GM12878 (cell line): ENCODE measurements at regions of chr10 and their contacts with region 1.

Region 1: DNA sequence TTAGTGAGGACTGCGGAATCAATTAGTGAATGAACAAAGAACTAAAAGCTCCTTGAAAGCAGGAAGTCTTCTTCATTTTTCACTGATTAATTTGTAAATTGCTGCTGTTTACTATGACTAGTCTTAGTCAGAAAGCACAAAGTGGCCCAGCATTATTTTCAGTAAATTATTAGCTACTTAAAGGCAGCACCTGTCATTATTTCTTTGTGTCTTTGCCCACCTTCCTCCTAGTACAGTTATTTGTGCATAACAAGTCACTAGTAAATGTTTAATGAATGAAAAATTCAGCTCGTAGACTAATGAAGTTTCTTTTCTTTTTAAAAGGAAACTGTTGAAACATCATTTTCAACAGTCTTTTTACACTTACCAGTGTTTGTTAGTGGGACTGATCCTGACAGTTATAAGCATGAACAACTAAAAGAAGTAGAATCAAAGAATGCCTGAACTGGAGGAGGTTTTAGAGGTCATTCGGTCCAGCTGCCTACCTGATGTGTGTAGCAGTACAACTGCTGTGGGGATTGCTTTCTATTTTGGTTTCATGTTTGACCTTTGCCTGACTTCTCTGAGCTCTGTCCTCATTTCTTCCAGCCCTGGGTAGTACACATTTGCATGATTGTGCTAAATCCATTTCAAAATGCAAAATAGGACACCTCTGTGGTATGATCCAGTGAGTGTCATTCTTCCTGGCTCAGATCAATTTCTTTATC is 140.0 kb upstream of the PHYHIPL start:
- DNase-seq: peak; percentile 55
- ATAC-seq: peak; percentile 99
- H3K4me3 ChIP-seq: 0 out of 2 replicates have a peak overlapping the region, but pooled peaks have one; percentile 20
- H3K27ac ChIP-seq: peak overlapping the region; percentile 39; the same call in 1 of the 2 replicates
- H3K4me1 ChIP-seq: peaks cover 13% of the 10 kb centered on the region
- H3K27me3 ChIP-seq: no peaks in the 10 kb centered on the region
- CTCF ChIP-seq: no peak
- EP300 ChIP-seq: peak in 1 of 2 experiments; percentile 71; a peak in 3 of 4 replicates
- POLR2A ChIP-seq: no peak
- RAD21 ChIP-seq: no peak

Region 2: GRCh38 chr10:58867683-58868082 is 168.8 kb before region 1 on chr10:
- CTCF ChIA-PET with region 1: no interaction called
- POLR2A ChIA-PET with region 1: no interaction called
- RAD21 ChIA-PET with region 1: no interaction called
- SMC1A ChIA-PET with region 1: no interaction called
- in situ Hi-C with region 1: no loop called
- intact Hi-C with region 1: no loop called
- DNase-seq: no peak
- ATAC-seq: peak; percentile 62
- H3K4me3 ChIP-seq: no peak overlapping the region
- H3K27ac ChIP-seq: no peak overlapping the region
- H3K4me1 ChIP-seq: no peaks in the 10 kb centered on the region
- H3K27me3 ChIP-seq: no peaks in the 10 kb centered on the region
- CTCF ChIP-seq: no peak
- EP300 ChIP-seq: no peak
- POLR2A ChIP-seq: no peak
- RAD21 ChIP-seq: no peak

Region 3: DNA sequence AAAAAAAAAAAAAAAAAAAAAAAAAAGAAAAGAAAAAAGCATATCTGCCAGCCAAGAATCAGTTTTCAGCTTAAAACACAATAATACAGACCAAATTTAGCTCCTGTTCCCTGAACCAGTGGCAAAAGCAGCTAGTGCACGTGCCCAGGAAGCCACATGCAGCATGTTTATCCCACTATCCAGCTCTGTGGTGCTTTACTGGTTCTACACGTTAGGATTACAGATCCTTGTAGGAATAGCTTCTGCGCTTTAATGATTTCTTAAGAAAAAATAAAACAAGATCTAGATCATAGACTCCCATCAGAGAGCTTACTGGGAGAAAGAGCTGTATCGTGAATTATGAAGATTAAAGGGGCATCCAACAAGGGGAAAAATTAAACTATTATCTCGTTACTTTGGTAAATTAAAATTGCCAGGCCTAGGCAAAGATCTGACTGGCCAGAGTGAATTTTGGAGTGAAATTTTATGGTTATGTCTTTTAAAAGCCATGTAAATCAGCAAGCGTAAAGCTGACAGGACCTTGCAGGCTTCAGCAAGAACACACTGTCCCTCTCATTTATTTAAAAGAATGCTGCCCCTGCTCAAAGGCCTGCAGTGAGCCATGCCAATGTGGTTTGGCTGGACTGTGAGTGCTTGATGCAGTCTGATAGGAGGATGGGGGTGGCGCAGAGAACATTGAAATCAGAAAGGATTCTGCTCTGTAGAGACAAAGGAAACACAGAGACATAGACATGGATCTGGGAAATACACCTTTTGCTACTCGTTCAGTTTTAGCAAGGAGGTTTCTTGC is 37.3 kb before region 1 on chr10:
- CTCF ChIA-PET with region 1: interaction called, 3 read pairs
- POLR2A ChIA-PET with region 1: interaction called, 9 read pairs
- RAD21 ChIA-PET with region 1: interaction called, 139 read pairs
- SMC1A ChIA-PET with region 1: interaction called, 78 read pairs
- in situ Hi-C with region 1: no loop called
- intact Hi-C with region 1: no loop called
- DNase-seq: no peak
- ATAC-seq: no peak
- H3K4me3 ChIP-seq: no peak overlapping the region
- H3K27ac ChIP-seq: no peak overlapping the region
- H3K4me1 ChIP-seq: peaks cover 36% of the 10 kb centered on the region
- H3K27me3 ChIP-seq: no peaks in the 10 kb centered on the region
- CTCF ChIP-seq: no peak
- EP300 ChIP-seq: no peak
- POLR2A ChIP-seq: no peak
- RAD21 ChIP-seq: no peak

Region 4: GRCh38 chr10:59006511-59007306 is 29.8 kb before region 1 on chr10:
- CTCF ChIA-PET with region 1: interaction called, 5 read pairs
- POLR2A ChIA-PET with region 1: interaction called, 7 read pairs
- RAD21 ChIA-PET with region 1: interaction called, 16 read pairs
- SMC1A ChIA-PET with region 1: interaction called, 37 read pairs
- in situ Hi-C with region 1: no loop called
- intact Hi-C with region 1: no loop called
- DNase-seq: no peak
- ATAC-seq: peak; percentile 49
- H3K4me3 ChIP-seq: no peak overlapping the region
- H3K27ac ChIP-seq: no peak overlapping the region
- H3K4me1 ChIP-seq: peaks cover 4% of the 10 kb centered on the region
- H3K27me3 ChIP-seq: no peaks in the 10 kb centered on the region
- CTCF ChIP-seq: no peak
- EP300 ChIP-seq: 0 out of 4 replicates have a peak, but pooled peaks of 1 of the 2 experiments have one; percentile 26
- POLR2A ChIP-seq: no peak
- RAD21 ChIP-seq: no peak

Region 5: DNA sequence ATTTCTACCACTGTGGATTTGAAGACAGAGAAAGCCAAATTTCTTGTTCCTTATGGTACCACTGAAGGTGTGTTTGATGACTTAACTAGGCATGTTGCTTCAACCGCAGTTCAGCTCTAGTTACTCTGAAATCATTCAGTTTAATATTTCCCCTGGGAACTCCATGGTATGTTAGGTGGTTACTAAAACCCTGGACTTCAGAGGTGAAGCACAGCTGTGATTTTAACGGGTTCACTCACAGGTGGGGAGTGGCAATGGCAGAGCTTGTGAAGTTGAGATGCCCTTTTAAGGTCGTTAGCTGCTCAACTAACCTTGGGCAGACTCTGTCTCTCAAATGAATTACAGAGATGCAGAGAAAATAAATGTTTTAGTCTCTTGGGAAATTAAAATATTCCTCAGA is 23.6 kb before region 1 on chr10:
- CTCF ChIA-PET with region 1: interaction called, 5 read pairs
- POLR2A ChIA-PET with region 1: interaction called, 7 read pairs
- RAD21 ChIA-PET with region 1: interaction called, 16 read pairs
- SMC1A ChIA-PET with region 1: interaction called, 23 read pairs
- in situ Hi-C with region 1: no loop called
- intact Hi-C with region 1: no loop called
- DNase-seq: no peak
- ATAC-seq: peak; percentile 79
- H3K4me3 ChIP-seq: no peak overlapping the region
- H3K27ac ChIP-seq: no peak overlapping the region
- H3K4me1 ChIP-seq: no peaks in the 10 kb centered on the region; the same call in 1 of the 2 replicates
- H3K27me3 ChIP-seq: no peaks in the 10 kb centered on the region
- CTCF ChIP-seq: no peak
- EP300 ChIP-seq: 0 out of 4 replicates have a peak, but pooled peaks of 1 of the 2 experiments have one; percentile 10
- POLR2A ChIP-seq: no peak
- RAD21 ChIP-seq: no peak

Region 6: DNA sequence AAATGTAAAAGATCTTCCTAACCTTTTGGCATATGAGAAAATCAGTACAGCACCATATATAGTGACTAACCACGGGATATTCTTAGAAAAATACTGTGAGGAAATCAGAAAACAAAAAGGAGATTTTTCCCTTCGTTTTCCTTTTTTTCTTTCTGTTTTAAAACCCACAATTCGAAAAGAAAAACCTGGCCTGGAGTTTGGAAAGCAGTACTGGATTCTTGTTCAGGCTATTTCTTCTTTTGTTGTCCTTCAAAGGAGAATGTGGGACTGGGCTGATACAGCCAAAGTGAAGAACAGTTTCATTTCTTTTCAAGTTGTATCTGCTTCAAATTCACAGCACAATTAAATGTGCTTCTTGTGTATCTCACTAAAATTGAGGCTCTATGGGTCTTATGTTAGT is 16.9 kb before region 1 on chr10:
- CTCF ChIA-PET with region 1: interaction called, 5 read pairs
- POLR2A ChIA-PET with region 1: interaction called, 5 read pairs
- RAD21 ChIA-PET with region 1: interaction called, 4 read pairs
- SMC1A ChIA-PET with region 1: interaction called, 23 read pairs
- in situ Hi-C with region 1: no loop called
- intact Hi-C with region 1: no loop called
- DNase-seq: no peak
- ATAC-seq: peak; percentile 34; the same call in 2 of the 3 replicates
- H3K4me3 ChIP-seq: no peak overlapping the region
- H3K27ac ChIP-seq: no peak overlapping the region
- H3K4me1 ChIP-seq: no peaks in the 10 kb centered on the region
- H3K27me3 ChIP-seq: no peaks in the 10 kb centered on the region
- CTCF ChIP-seq: no peak
- EP300 ChIP-seq: no peak
- POLR2A ChIP-seq: no peak
- RAD21 ChIP-seq: no peak

Region 7: GRCh38 chr10:59073456-59074053 is 37.1 kb after region 1 on chr10:
- CTCF ChIA-PET with region 1: no interaction called
- POLR2A ChIA-PET with region 1: interaction called, 3 read pairs
- RAD21 ChIA-PET with region 1: interaction called, 5 read pairs
- SMC1A ChIA-PET with region 1: interaction called, 12 read pairs
- in situ Hi-C with region 1: no loop called
- intact Hi-C with region 1: no loop called
- DNase-seq: no peak
- ATAC-seq: peak; percentile 14; the same call in 1 of the 3 replicates
- H3K4me3 ChIP-seq: no peak overlapping the region
- H3K27ac ChIP-seq: no peak overlapping the region
- H3K4me1 ChIP-seq: no peaks in the 10 kb centered on the region
- H3K27me3 ChIP-seq: no peaks in the 10 kb centered on the region
- CTCF ChIP-seq: no peak
- EP300 ChIP-seq: no peak
- POLR2A ChIP-seq: no peak
- RAD21 ChIP-seq: no peak

Region 8: GRCh38 chr10:59857049-59857448 is 820.6 kb after region 1 on chr10:
- CTCF ChIA-PET with region 1: no interaction called
- POLR2A ChIA-PET with region 1: no interaction called
- RAD21 ChIA-PET with region 1: no interaction called
- SMC1A ChIA-PET with region 1: no interaction called
- in situ Hi-C with region 1: no loop called
- intact Hi-C with region 1: no loop called
- DNase-seq: no peak
- ATAC-seq: no peak
- H3K4me3 ChIP-seq: no peak overlapping the region
- H3K27ac ChIP-seq: no peak overlapping the region
- H3K4me1 ChIP-seq: peaks cover 7% of the 10 kb centered on the region; the same call in 1 of the 2 replicates
- H3K27me3 ChIP-seq: no peaks in the 10 kb centered on the region
- CTCF ChIP-seq: no peak
- EP300 ChIP-seq: no peak
- POLR2A ChIP-seq: no peak
- RAD21 ChIP-seq: no peak